Activated naive CD4-positive, alpha-beta T cell treated with anti-CD3 and anti-CD28 coated beads for 36 hours (primary cell): ENCODE measurements at regions of chr10 and their contacts with region 1.

Region 1: GRCh38 chr10:132307823-132308587 is at the start of gene STK32C:
- DNase-seq: peak; percentile 90
- H3K4me3 Mint-ChIP-seq: peak within 1 kb of the TSS; percentile 85
- H3K27ac Mint-ChIP-seq: no peak within 1 kb of the TSS
- H3K4me1 Mint-ChIP-seq: peaks cover 9% of the 10 kb centered on the region
- H3K27me3 Mint-ChIP-seq: peaks cover 2% of the 10 kb centered on the region
- total RNA-seq, gene STK32C: 16.5 to 16.6 TPM

Region 2: GRCh38 chr10:132163278-132163765 is 144.7 kb before region 1 on chr10:
- CTCF ChIA-PET with region 1: no interaction called
- intact Hi-C with region 1: loop called (anchors 2 kb)
- DNase-seq: peak; percentile 77
- H3K4me3 Mint-ChIP-seq: no peak overlapping the region
- H3K27ac Mint-ChIP-seq: peak overlapping the region; percentile 44
- H3K4me1 Mint-ChIP-seq: peaks cover 30% of the 10 kb centered on the region
- H3K27me3 Mint-ChIP-seq: no peaks in the 10 kb centered on the region

Region 3: DNA sequence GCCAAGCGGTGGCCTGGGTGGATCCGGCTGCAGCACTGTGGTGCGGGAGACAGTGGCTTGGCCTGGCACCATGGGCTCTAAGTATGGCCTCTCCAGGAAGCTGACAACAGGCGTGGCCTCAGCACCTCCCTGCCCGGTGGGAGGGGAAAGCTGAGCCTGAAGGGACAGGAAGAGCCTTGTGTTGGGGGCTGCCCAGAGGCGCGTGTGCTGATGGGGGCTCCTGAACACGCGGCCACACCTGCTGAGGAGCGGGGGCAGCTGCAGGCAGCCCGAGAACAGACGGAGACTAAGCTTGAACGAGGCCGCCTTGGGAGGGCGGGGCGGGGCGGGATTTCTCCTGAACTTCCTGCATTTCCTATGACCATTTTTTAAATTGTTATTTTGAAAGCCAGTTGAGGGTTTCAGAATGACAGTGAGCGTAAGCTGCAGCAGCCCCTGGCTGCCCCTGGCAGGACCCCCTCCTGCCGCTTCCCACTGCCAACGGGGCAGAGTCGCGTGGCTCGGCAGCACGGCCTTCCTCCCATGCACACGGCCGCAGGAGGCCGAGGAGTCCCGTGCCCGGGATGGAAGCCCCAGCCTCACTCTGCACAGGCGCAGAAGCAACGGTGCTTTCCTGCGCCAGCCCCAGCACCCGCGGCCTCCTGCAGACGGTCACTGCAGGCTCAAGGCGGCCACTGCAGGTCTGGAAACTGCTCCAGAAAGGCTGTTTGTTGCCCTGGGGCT is 78.0 kb before region 1 on chr10:
- CTCF ChIA-PET with region 1: no interaction called
- intact Hi-C with region 1: loop called (anchors 5 kb)
- DNase-seq: peak; percentile 64
- H3K4me3 Mint-ChIP-seq: peak overlapping the region; percentile 53
- H3K27ac Mint-ChIP-seq: peak overlapping the region; percentile 73
- H3K4me1 Mint-ChIP-seq: peaks cover 22% of the 10 kb centered on the region
- H3K27me3 Mint-ChIP-seq: no peaks in the 10 kb centered on the region

Region 4: DNA sequence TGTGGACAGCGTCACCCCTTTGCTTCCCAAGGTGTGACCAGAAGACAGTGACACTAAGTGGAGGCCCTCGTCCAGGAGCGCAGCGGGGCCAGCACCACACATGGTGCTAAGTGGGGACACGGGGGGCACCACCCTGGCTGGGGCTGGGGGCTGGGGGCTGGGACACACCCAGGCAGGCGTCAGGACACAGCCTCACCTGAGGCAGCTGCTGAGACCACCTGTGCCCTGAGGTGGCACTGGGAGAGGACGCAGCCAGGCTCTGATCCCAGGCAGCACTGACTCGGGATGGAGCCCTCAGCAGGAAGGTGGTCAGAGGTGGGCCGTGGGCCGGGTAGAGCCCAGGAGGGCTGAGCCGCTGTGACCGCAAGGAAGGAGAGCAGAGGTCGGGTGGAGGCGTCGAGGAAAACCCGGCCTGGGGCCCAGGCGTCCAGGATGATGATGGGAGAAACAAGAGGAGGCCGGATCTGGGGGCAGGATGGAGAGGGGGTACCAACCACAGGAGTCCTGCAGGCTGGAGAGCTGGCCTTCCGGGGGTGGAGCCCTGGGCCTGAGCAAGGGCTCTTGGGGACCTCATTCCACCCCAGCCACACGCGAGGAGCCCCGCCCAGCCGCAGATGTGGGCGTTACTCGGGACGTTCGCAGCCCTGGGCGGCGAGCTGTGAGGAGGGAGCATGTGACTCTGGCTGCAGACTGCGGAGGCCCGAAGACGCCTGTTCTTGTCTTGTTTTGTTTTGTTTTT is 46.5 kb after region 1 on chr10:
- CTCF ChIA-PET with region 1: no interaction called
- intact Hi-C with region 1: loop called (anchors 5 kb)
- DNase-seq: no peak
- H3K4me3 Mint-ChIP-seq: no peak overlapping the region
- H3K27ac Mint-ChIP-seq: no peak overlapping the region
- H3K4me1 Mint-ChIP-seq: peaks cover 3% of the 10 kb centered on the region
- H3K27me3 Mint-ChIP-seq: no peaks in the 10 kb centered on the region

Region 5: DNA sequence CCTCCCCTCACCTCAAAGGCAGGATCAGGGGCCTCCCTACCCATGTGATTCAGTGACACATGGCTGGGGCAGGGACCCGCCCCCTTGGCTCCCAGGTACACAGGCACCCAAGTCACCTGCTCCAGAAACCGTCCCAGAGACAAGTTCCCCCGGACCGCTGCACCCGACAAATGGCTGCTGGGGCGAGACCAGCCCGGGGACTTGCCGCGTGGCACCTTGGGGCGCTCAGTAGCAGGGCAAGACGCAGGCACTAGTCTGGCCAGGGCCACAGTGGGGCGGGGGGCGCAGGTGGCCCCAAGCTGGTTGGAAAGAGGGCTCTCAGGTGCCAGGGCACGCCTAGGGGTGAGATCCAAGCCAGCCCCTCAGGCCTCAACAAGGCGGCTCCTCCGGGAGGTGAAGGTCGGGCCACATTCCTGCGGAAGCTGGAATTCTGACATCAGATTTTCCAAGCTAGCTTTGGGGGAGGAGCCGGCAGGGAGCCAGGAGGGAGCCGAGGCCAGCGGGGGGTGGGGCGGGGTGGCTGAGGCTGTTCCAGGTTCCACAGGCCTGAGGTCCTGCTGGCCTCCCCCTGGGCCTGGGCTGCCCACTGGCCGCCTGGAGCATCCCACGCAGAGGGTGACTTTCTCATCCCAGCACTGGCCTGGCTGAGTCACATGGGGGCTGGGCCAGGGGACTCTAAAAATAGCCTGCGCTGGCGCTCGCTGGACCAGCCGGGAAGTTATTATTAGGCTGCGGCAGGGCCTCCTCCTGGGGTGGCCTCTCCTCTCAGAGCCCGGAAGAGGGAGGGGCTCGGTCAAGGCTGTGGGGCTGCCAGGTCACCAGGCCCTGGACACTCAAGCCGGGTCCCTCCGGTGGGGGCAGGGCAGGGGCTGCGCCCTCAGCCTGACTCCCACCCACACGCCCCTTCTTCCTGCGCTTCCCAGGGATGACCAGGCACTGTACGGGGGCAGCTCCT is 209.0 kb after region 1 on chr10:
- CTCF ChIA-PET with region 1: no interaction called
- intact Hi-C with region 1: no loop called
- DNase-seq: no peak
- H3K4me3 Mint-ChIP-seq: no peak overlapping the region
- H3K27ac Mint-ChIP-seq: no peak overlapping the region
- H3K4me1 Mint-ChIP-seq: peaks cover 4% of the 10 kb centered on the region
- H3K27me3 Mint-ChIP-seq: peaks cover 2% of the 10 kb centered on the region